Endothelial cell of umbilical vein (primary cell): ENCODE measurements at regions of chr17 and their contacts with region 1.

Region 1: GRCh38 chr17:49861150-49861892 is 13.5 kb upstream of the TAC4 start:
- DNase-seq: peak; percentile 30
- H3K4me3 ChIP-seq: no peak overlapping the region
- H3K27ac ChIP-seq: no peak overlapping the region
- H3K4me1 ChIP-seq: no peaks in the 10 kb centered on the region
- H3K27me3 ChIP-seq: peaks cover 3% of the 10 kb centered on the region in 2 experiments
- CTCF ChIP-seq: peak; percentile 57 to 78
- POLR2A ChIP-seq: no peak

Region 2: GRCh38 chr17:49880291-49881053 is 19.2 kb after region 1 on chr17:
- CTCF ChIA-PET with region 1: interaction called, 19 read pairs
- POLR2A ChIA-PET with region 1: no interaction called
- dilution Hi-C with region 1: no loop called
- intact Hi-C with region 1: no loop called
- DNase-seq: peak; percentile 54
- H3K4me3 ChIP-seq: no peak overlapping the region
- H3K27ac ChIP-seq: no peak overlapping the region
- H3K4me1 ChIP-seq: no peaks in the 10 kb centered on the region
- H3K27me3 ChIP-seq: peaks cover 19 to 23% of the 10 kb centered on the region in 2 experiments
- CTCF ChIP-seq: peak; percentile 83 to 98
- POLR2A ChIP-seq: no peak

Region 3: DNA sequence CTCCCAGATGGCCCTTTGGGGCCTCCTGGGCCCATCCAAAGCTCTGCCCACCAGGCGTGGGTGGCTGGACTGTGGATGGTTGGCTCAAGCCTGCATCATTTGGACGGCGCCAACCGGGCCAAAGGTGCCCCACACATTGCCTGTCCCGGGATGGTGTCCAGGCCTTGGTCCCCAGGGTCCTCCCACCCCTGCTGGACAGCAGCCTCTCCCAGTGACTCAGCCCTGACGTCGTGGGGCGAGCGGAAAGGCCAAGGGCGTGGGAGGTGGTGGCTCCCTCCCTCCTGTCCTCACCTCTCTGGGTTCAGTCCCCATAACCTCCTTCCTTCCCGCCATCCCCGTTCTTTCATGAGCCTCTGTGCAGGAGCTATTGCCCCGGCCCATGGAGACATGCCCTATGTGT is 65.6 kb after region 1 on chr17:
- CTCF ChIA-PET with region 1: no interaction called
- POLR2A ChIA-PET with region 1: no interaction called
- dilution Hi-C with region 1: no loop called
- intact Hi-C with region 1: no loop called
- DNase-seq: no peak
- H3K4me3 ChIP-seq: no peak overlapping the region
- H3K27ac ChIP-seq: no peak overlapping the region
- H3K4me1 ChIP-seq: no peaks in the 10 kb centered on the region
- H3K27me3 ChIP-seq: peaks cover 0 to 3% of the 10 kb centered on the region in 2 experiments
- CTCF ChIP-seq: no peak
- POLR2A ChIP-seq: no peak

Region 4: DNA sequence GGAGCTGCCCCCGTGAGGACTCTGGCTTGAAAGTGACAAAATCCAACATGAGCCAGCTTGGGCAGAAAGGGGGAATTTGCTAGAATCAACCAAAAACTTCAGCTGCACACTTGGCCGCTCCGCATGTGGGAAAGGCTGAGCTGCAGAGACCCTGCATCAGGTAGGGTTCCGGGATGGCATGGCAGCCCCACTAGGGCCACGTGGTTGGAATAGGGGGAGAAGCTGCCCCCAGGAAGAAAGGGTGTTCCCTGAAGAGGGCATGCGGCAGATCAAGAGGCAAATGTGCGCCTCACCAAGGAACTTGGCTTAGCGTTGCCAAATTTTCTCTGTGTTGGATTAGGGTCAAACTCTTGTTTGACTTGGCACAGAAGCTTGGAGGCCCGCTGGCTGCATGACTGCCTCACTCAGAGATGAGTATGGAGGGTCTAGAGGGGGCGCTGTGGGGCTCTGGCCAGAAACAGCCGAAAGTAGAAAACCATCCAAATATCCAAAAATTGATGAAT is 944.9 kb after region 1 on chr17:
- CTCF ChIA-PET with region 1: no interaction called
- POLR2A ChIA-PET with region 1: no interaction called
- dilution Hi-C with region 1: no loop called
- intact Hi-C with region 1: no loop called
- DNase-seq: no peak
- H3K4me3 ChIP-seq: no peak overlapping the region
- H3K27ac ChIP-seq: no peak overlapping the region
- H3K4me1 ChIP-seq: no peaks in the 10 kb centered on the region
- H3K27me3 ChIP-seq: peaks cover 0 to 2% of the 10 kb centered on the region in 2 experiments
- CTCF ChIP-seq: no peak
- POLR2A ChIP-seq: no peak